ENCODE measurements at regions of chr12 and their contacts with region 1.

Region 1: DNA sequence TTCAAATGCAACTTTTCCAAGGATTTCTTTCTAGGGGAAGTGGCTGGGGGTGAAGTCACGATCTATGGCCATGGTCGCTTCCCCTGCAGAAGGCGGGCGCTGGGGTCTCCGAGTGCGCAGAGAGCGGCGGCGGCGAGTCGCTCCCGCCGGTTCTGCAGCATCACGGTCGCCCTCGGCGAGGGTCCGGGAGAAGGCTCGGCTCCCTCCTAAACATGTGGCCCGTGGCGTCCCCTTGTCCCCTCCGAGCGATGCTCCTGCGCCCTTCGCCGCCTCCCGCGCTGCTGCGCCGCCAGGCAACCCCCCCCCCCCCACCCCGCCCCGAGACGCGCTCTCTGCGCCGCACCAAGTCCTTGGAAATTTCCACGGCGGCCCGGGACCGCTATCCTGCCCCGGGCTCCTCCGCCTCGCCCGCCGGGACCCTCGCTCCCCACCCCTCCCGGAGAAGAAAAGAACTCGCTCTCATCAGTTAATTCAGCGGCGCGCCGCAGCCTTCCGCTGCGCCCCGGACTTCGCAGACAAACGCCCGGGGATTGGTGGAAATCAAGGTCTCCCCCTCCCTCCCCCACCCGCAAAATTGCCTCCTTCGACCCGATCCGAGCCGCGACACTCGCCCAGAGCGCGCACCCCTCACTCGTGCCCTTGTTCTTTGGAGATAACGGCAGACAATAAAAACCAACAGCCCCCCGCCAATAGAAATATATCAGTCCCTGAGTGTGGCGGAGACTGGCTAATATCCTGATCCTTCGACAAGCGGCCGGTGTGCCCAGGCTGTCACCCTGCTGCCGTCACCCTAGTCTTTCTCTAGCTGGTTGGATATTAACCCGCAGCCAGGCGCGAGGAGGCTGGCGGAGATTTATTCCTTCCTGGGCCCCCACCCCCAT is at the start of gene ST8SIA1:
- DNase-seq: peak; percentile 53
- ATAC-seq: peak; percentile 67 to 73
- total RNA-seq, gene ST8SIA1: 3.0 to 6.9 TPM

Region 2: GRCh38 chr12:22100958-22101748 is 233.5 kb before region 1 on chr12:
- intact Hi-C with region 1: loop called in 1 of 2 experiments (anchors 5 kb)
- DNase-seq: peak; percentile 28
- ATAC-seq: peak; percentile 68 to 75

Region 3: DNA sequence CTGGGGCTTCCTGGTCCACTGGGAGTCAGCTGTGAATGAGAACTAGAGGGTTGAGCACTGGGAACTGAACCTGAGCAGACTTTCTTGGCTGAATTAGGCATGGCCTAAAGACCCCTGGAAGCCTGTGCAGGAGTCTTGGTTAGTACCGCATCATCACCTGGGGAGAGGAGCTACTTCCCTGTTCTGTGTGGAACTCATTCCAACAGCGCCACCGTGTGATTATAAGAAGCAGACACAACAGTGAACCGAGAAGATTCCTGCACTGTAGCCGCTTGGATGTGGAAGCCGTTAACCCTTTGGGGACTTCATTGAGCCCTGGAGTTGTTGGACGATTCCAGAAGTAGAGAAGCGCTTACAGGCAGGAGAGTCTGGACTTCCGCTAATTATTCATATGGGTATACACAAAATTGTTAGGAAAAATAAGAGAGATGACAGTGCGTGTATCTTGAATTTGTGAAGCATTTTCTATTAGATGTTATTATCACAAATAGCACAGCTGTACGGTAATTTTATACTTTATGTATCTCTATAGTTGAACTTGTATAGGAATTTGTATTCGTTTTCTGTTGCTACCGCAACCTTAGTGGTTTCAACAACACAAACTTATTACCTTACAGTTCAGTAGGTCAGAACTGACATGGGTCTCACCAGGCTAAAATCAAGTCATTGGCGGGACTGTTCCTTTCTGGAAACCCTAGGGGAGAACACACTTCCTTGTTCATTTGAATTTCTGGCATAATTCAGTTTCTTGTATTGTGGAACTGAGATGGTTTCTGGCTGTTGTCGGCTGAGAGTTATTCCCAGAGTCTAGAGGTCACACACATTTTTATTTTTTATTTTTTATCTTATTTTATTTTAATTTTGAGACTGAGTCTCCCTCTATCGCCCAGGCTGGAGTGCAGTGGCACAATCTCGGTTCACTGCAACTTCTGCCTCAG is 109.0 kb after region 1 on chr12:
- intact Hi-C with region 1: loop called in 1 of 2 experiments (anchors 5 kb)
- DNase-seq: peak; percentile 50
- ATAC-seq: peak; percentile 96 to 98

Measured in left cardiac atrium (tissue), 4 donors.